ENCODE measurements at regions of chr14 and their contacts with region 1.

Region 1: GRCh38 chr14:101823511-101824120 is 62.1 kb downstream of the PPP2R5C start:
- DNase-seq: peak; percentile 74
- H3K4me3 Mint-ChIP-seq: peak overlapping the region; percentile 78
- H3K27ac Mint-ChIP-seq: peak overlapping the region; percentile 98
- H3K4me1 Mint-ChIP-seq: peaks cover 84% of the 10 kb centered on the region
- H3K27me3 Mint-ChIP-seq: no peaks in the 10 kb centered on the region

Region 2: GRCh38 chr14:101335061-101335661 is 488.5 kb before region 1 on chr14:
- intact Hi-C with region 1: no loop called
- DNase-seq: no peak
- H3K4me3 Mint-ChIP-seq: no peak overlapping the region
- H3K27ac Mint-ChIP-seq: no peak overlapping the region
- H3K4me1 Mint-ChIP-seq: no peaks in the 10 kb centered on the region
- H3K27me3 Mint-ChIP-seq: peaks cover 4% of the 10 kb centered on the region

Region 3: DNA sequence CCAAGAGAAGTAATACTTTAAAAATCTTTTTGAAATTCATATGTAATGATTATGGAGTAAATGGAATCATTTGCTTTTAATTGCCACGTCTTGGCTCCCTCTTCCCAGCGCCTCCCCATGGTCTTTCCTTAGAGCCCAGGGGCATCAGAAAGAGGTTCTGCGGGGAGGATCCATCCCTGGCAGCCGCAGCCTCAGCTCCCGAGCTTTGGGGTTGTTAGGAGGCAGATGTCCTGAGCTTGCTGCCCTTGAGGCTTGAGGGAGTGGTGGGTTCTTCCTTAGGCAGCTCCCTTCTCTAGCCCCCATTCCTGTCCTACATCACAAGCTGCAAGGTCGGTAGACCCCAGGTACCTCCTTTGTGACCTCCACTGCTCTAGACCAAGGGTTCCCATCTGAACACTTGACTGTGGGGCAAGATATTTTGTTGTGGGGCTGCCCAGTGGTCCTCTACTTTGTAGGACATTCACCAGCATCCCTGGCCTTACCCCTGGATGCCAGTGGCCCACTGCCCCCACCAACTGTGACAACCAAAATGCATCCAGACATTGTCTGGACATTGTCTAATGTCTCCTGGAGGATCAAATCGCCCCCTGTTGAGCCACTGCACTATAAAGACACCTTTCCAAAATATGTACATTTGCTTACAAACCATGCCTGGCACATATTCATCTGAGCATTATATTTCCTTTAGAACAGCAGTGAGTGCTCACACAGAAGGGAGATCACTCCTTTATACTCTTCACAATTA is 55.8 kb before region 1 on chr14:
- intact Hi-C with region 1: loop called (anchors 1 kb)
- DNase-seq: no peak
- H3K4me3 Mint-ChIP-seq: no peak overlapping the region
- H3K27ac Mint-ChIP-seq: no peak overlapping the region
- H3K4me1 Mint-ChIP-seq: peaks cover 36% of the 10 kb centered on the region
- H3K27me3 Mint-ChIP-seq: no peaks in the 10 kb centered on the region

Region 4: DNA sequence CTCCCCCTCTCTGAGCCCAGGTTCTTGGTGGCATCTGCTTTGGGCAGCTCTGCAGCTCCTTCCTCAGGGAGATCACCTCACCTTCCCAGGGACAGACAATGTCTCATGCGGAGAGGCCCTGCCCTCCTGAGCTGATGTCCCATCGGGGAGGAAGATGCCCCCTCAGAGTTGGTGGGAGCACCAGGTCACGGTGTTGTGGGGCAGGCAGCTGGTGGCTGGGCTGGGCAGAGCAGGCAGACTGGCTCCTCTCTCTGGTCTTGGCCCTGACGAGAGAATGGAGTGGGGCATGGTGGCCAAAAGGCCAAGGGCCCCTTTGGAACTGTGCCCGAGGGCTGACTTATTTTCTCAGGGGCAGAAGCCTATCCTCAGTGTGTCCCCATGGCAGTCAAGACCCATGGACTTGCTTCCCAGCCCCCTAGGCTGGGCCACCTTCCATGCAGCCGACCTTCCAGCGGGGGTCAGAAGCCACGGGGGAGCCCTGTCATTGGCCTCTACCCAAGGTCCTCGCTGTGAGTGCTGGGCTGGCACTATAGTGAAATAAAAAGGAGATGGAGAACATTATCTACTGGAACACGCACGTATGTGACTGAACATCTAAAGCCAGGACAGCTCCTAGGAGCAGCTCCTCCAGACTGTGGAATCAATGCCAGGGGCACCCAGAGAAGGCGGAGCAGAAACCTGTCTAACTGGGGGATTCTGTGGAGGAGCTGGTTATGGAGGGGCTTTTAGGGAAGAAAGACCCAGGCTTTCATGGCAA is 40.2 kb before region 1 on chr14:
- intact Hi-C with region 1: no loop called
- DNase-seq: no peak
- H3K4me3 Mint-ChIP-seq: peak overlapping the region; percentile 64
- H3K27ac Mint-ChIP-seq: peak overlapping the region; percentile 61
- H3K4me1 Mint-ChIP-seq: no peaks in the 10 kb centered on the region
- H3K27me3 Mint-ChIP-seq: peaks cover 11% of the 10 kb centered on the region

Region 5: DNA sequence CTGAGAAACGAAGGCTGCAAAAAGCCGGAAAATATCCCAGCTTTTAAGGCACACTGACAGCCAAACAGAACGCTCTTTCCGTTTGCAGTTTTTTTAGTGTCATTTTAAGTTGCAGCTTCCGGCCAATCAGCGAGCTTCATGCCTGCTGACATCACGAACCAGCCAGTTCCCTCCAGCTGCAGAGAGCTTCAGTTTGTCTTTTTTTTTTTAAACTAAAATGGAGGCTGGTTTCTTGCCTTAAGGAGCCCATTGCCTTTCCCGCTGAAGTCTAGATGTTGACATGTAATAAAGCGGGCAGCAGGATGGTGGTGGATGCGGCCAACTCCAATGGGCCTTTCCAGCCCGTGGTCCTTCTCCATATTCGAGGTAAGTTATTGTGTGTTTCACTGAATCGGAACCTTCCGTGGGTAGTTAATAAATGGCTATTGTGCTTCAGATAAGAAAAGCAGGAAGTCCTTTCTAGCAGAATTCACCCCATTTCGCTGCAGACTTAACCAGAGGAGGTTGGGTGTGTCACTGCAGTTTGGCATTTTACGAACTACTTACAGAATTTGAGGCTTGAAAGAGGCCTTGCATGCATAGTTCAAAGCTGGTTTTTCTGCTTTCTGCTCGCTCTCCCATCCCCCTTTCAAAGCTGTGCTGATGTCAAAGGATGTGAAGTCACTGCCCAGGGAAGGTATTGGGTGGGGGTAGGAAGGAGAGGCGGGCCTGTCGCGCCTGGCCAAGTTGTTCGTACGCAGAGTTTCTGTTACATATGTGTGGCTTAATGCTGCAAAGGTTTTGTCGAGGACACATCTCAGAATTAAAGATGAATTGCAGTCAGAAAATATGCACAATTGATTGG is 13.7 kb before region 1 on chr14:
- intact Hi-C with region 1: loop called (anchors 1 kb)
- DNase-seq: peak; percentile 88
- H3K4me3 Mint-ChIP-seq: peak overlapping the region; percentile 96
- H3K27ac Mint-ChIP-seq: peak overlapping the region; percentile 100
- H3K4me1 Mint-ChIP-seq: peaks cover 52% of the 10 kb centered on the region
- H3K27me3 Mint-ChIP-seq: no peaks in the 10 kb centered on the region

Region 6: DNA sequence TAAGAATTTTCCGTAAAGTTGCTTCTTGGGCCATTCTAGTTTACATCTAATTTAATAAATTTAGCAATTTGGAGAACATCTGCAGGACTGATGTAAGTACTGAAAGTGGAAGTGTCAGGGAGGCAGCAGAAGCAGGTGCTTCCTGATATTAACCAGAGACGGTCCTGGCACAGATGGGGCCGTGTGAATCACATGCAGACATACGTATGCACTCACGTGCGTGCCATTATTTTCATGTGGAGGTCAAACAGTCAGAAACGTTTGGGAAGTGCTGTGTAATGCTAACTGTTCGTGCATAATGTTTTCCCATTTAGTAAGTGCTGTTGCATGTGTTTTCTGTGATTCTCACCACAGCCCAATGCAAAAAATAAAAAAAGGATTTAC is 52.9 kb after region 1 on chr14:
- intact Hi-C with region 1: loop called (anchors 1 kb)
- DNase-seq: peak; percentile 46
- H3K4me3 Mint-ChIP-seq: peak overlapping the region; percentile 65
- H3K27ac Mint-ChIP-seq: peak overlapping the region; percentile 81
- H3K4me1 Mint-ChIP-seq: peaks cover 80% of the 10 kb centered on the region
- H3K27me3 Mint-ChIP-seq: no peaks in the 10 kb centered on the region

Region 7: DNA sequence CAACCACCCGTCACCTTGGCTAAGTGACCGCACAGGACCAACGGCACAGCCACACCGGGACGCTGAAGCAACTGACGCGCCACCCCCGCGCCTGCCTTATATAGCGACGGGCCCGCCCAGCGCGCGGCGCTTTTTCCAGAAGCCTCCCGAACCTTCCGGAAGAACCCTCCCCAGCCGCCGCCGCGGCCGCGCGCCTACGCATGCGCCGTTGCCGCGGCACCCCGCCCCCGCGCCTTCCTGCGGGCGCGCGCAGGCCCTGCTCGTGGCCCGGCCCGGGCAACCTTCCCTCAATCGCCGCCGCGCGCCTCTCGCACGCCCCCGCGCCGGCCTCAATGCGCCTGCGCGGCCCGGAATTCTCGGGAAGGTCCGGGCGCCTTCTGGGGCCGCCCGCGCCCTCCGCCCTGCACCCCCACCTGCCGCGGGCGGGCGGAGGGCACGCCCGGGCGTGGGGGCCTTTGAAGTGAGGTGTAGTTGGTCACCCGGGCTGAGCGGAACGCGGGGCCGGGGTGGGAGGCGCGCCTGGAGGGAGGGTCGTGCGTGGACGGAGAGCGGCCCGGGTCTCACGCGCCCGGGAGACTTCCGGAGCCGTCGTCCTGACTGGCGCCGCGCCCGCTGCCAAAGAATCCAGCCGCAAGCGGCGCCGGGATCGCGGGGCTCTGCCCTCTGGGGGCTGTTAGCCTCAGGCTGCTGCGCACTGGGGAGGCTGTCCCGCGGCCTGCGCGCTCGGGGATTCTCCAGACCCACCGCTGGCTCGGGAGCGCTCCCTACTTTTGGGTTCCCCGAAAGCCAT is 263.6 kb after region 1 on chr14 and contains the start of gene HSP90AA1:
- intact Hi-C with region 1: loop called (anchors 5 kb)
- DNase-seq: peak; percentile 94
- H3K4me3 Mint-ChIP-seq: peak within 1 kb of the TSS; percentile 99
- H3K27ac Mint-ChIP-seq: peak within 1 kb of the TSS; percentile 97
- H3K4me1 Mint-ChIP-seq: peaks cover 63% of the 10 kb centered on the region
- H3K27me3 Mint-ChIP-seq: no peaks in the 10 kb centered on the region
- total RNA-seq, gene HSP90AA1: 993 and 995 TPM in 2 replicates